ENCODE measurements at regions of chr22 and their contacts with region 1.

Region 1: DNA sequence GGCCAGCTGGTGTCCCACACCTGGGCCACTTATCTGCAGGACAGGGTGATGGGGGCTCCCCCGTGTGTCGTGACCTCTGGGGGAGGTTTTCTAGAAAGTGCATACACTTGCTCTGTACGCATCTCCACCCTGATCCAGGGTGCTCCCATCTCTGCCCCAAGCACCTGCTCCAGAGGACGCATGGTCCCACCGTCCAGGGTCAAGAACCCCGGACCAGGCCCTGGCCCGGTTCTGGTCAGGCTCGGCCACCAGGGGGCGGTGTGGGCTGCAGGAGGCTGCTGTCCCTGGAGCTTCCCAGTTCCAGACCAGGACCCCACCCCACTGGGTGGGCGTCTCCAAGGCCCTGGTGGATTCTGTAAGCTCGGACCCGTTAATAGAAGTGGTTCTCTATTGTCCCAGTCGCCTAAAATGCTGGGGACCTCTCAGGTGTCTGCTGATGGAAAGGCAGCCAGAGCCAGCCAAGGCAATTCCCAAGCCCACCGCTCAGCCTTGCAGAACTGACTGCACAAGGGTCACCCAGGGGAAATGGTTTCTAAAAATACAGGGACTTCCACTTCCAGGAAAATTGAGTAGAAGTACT is 34.7 kb upstream of the SEPTIN5 start:
- DNase-seq: peak; percentile 88
- ATAC-seq: peak; percentile 82

Region 2: GRCh38 chr22:19291580-19292457 is 387.8 kb before region 1 on chr22 and contains the start of gene CLTCL1:
- intact Hi-C with region 1: no loop called
- DNase-seq: peak; percentile 92
- ATAC-seq: peak; percentile 90
- total RNA-seq, gene CLTCL1: 8.3 TPM

Region 3: GRCh38 chr22:19432133-19432851 is 247.3 kb before region 1 on chr22 and contains the start of gene MRPL40:
- intact Hi-C with region 1: no loop called
- DNase-seq: peak; percentile 98
- ATAC-seq: peak; percentile 98
- total RNA-seq, gene MRPL40: 60.4 TPM

Region 4: DNA sequence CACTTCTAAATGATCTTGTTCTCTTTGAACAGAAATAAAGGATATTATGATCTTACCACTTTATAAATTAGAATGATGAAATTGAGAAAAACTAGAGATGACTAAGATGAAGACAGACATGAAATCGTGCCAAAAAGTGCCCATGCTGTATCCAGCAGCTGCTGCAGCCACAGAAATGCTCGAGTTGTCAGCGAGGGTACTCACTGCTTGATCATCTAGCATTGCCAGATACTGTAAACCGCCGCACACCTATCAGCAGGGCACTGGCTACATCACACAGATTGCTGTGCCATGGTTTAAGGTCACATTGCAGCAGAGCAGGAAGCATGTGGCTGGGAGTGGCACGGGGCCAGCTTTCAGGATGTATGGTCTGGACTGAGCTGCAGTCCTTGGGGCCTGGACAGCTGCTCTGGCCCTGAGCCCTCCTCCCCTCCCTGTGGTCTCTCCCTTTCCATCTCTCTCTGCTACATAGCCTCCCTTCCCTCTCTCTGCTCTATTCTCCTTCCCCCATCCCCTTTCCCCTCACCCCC is 16.3 kb before region 1 on chr22:
- intact Hi-C with region 1: no loop called
- DNase-seq: peak; percentile 75
- ATAC-seq: peak; percentile 61

Region 5: DNA sequence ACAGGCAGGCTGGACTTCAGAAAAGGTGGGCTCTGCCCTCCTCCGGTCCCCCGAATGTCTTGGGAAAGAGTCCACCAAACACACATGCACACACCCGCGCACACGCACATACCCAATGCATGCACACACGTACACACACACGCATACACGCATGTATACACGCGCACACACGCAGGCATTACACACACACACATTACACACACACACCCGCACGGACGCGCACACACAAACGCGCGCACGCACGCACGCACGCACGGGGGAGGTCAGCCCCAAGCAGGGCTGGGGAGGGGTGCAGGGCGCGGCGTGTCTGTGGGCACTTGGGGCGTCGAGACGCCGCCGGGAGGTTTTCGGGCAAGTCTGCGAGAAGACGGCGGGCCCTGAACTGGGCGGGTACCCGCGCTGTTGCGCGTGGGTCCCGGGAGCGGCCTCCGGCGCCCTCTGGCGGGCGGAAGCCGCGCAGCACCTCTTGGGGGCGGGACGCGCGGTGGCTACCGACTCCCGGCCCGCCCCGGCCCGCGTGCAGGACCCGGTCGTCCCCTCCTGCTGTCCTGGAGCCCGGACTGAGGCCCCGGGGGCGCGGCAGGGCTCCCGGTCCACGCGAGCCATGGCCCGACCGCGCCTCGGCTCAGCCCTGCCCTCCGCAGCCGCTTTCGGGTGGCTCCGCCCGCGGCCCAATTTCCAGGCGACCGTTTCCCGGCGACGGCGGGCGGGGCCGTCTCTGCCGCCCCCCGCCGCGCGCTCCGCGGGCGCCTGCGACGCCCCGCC is 38.3 kb after region 1 on chr22:
- intact Hi-C with region 1: loop called (anchors 2 kb)
- DNase-seq: peak; percentile 89
- ATAC-seq: peak; percentile 76